Vagina (tissue), 2 donors: ENCODE measurements at regions of chr17 and their contacts with region 1.

Region 1: DNA sequence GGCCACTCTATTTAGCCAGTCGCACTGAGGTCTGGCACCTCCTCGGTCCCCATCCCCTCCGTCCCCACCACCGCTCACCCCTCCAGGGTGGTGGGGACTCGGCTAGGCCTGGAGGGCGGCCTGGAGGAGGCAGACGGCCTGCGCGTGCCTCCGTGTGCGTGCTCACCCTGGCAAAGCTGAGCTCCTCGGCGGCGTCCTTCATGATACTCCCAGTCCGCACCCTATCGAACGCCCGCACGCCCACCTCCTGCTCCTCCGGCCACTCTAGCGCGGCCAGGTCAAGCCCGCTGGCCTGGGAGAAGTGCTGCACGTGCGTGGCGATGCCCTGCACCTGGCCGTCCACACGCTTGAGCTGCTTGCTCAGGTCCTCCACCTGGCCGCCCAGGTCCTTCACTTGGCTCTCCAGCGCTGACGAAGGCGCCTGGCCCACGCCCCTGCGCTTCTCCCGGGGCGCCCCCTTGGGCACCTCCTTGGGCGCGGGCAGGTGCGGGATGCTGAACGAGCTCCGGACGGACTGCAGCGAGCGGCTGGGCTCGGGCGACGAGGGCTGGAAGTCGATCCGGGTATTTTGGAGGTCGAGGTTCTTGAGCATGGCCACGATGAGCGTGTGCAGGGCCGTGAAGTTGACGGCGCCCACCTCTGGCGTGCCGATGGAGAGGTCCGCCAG is 644 bp downstream of the QRICH2 start:
- DNase-seq: no peak
- H3K4me3 ChIP-seq: no peak overlapping the region
- H3K27ac ChIP-seq: no peak overlapping the region
- H3K4me1 ChIP-seq: no peaks in the 10 kb centered on the region
- H3K27me3 ChIP-seq: no peaks in the 10 kb centered on the region
- CTCF ChIP-seq: no peak
- POLR2A ChIP-seq: no peak

Region 2: DNA sequence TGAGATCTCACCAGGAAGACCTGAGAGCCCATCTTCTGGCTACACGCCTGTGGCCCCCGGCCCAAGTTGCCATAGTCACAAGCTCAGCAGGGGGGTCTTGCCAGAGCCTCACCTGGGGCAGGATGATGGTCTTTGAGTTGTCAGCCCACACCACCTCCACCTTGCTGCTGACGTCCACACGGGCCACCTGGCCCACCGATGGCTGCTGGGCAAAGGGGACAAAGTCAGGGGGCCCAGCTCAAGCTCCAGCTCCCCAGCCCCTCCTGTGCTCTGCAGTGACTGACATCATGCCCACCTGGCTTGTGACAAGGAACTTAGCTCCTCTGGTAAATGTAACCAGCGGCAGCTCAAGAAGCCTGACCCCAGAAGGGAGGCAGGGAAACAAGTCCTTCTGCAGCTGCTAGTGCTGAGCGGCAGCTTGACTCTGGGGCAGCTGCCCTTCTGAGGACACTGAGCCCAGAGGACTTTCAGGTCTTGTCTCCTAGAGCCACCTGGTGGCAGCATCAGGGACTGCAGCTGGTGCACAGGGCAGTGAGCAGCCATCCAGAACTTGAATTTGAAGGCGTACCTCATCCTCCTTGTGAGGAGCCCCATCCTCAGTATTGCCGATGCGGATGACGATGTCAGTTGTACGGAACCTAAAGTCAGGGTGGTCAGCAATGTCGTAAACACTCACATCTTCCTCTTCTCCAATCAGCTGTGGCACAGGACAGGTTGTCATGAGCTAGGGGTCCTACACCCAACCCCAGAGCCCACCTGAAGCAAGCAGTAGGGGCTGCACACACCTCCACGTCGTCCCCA is 90.5 kb after region 1 on chr17:
- intact Hi-C with region 1: loop called (anchors 2 kb)
- DNase-seq: no peak
- H3K4me3 ChIP-seq: no peak overlapping the region
- H3K27ac ChIP-seq: no peak overlapping the region
- H3K4me1 ChIP-seq: no peaks in the 10 kb centered on the region
- H3K27me3 ChIP-seq: no peaks in the 10 kb centered on the region
- CTCF ChIP-seq: peak; percentile 92 to 99 (median 98)
- POLR2A ChIP-seq: no peak

Region 3: DNA sequence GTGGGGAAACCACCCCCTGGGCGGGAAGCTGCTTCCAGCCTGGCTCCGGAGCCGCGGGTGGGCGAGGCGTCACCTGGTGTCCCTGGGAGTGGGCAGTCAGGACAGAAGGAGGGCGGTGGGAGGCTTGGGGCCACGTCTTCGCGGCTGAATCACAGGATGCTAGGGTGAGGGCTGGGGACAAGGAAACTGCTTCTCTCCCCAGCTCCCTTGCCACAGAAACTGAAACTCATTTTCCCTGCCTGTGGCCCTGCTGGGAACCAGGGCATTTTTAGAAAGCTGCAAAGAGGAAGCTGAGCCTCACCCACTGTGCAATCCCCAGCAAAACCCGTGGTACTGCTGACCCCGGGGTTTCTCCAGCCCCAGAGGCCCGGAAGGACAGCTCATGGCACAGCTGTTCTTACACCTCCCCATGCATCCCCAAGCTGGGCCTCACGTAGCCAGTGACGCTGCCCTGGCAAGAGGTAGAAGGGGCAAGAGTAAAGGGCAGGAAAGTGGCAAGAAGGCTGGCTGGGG is 185.6 kb after region 1 on chr17:
- intact Hi-C with region 1: loop called (anchors 10 kb)
- DNase-seq: no peak
- H3K4me3 ChIP-seq: peak overlapping the region; percentile 4 to 10
- H3K27ac ChIP-seq: peak overlapping the region; percentile 74
- H3K4me1 ChIP-seq: peaks cover 52% of the 10 kb centered on the region
- H3K27me3 ChIP-seq: no peaks in the 10 kb centered on the region
- CTCF ChIP-seq: no peak
- POLR2A ChIP-seq: no peak